ENCODE measurements at regions of chr4 and their contacts with region 1.

Region 1: GRCh38 chr4:26081795-26082498 is 167.9 kb downstream of the SMIM20 start:
- DNase-seq: no peak
- H3K4me3 ChIP-seq: no peak overlapping the region; a peak in 1 of 4 replicates
- H3K27ac ChIP-seq: no peak overlapping the region
- H3K4me1 ChIP-seq: peaks cover 0 to 27% of the 10 kb centered on the region in 2 experiments; a peak in 2 of 4 replicates
- H3K27me3 ChIP-seq: peaks cover 39% of the 10 kb centered on the region
- CTCF ChIP-seq: peak; percentile 80
- EP300 ChIP-seq: no peak
- RAD21 ChIP-seq: peak; percentile 63

Region 2: GRCh38 chr4:26069218-26069617 is 12.7 kb before region 1 on chr4:
- CTCF ChIA-PET with region 1: interaction called, 21 read pairs
- POLR2A ChIA-PET with region 1: no interaction called
- DNase-seq: peak; percentile 62
- H3K4me3 ChIP-seq: no peak overlapping the region; a peak in 1 of 4 replicates
- H3K27ac ChIP-seq: no peak overlapping the region
- H3K4me1 ChIP-seq: peaks cover 0 to 6% of the 10 kb centered on the region in 2 experiments; a peak in 1 of 4 replicates
- H3K27me3 ChIP-seq: peaks cover 6% of the 10 kb centered on the region; the same call in 1 of the 2 replicates
- CTCF ChIP-seq: peak; percentile 48
- EP300 ChIP-seq: no peak
- RAD21 ChIP-seq: peak; percentile 62

Region 3: DNA sequence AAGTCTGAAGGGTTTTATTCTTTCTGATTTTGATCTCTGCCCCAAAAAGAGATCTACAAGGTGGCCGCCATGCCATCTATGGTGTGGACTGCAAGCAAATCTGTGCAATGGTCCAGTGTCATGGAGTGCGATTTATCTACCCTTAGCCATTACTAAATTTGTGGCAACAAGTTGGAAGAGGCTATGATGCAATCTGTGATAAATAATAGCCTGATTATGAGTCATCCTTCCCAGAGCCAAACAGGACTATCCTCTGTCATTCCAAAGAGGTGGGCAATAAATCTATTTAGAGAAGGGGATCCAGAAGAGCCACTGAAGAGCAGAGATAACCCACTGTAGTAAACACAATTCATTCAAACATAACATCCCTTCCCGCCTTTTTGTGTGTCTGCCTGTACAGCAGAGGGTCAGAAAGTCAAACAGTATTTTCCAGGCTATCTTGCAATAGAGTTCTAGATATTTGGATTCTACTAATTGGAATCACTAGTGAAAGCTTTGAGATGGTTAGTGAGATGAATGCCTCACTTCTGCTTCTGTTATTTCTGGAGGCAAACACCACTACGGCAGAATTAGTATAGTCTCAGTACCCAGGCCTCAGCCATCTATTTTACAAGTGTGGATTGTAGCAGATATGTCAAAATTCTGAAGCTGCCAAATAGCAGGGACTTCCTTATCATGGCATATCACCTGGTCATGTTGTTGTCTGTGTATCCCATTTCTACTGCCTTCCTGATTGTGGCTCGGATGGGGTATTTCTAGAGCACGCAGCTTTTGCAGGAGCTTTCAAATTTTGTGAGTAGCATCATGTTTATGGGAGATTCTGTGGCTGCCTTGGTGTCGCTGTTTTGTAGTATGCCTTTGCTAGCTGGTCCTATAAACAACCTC is 24.1 kb after region 1 on chr4:
- CTCF ChIA-PET with region 1: interaction called, 11 read pairs
- POLR2A ChIA-PET with region 1: no interaction called
- DNase-seq: no peak
- H3K4me3 ChIP-seq: no peak overlapping the region
- H3K27ac ChIP-seq: no peak overlapping the region
- H3K4me1 ChIP-seq: no peaks in the 10 kb centered on the region
- H3K27me3 ChIP-seq: no peaks in the 10 kb centered on the region
- CTCF ChIP-seq: no peak
- EP300 ChIP-seq: peak in 1 of 2 experiments; percentile 12; a peak in 1 of 4 replicates
- RAD21 ChIP-seq: no peak

Region 4: DNA sequence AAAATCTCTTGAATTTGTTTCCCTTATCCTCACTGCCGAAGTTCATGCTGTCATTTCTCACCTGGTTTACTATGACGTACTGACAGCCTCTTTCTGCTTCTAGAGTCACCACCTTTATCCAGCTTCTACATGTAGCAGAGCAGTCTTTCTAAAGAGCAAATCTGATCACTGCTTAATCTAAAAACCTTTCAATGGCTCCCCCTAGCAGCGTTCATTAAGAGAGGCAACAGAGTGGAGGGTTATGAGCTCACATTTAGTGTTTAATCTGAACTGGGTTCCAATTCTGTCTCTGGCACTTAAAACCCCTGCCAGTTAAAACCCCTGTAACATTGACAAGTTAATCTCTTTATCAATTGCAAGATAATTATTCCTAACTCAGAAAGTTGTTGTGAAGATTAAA is 243.2 kb after region 1 on chr4:
- CTCF ChIA-PET with region 1: interaction called, 16 read pairs
- POLR2A ChIA-PET with region 1: no interaction called
- DNase-seq: peak; percentile 33
- H3K4me3 ChIP-seq: no peak overlapping the region
- H3K27ac ChIP-seq: no peak overlapping the region
- H3K4me1 ChIP-seq: peaks cover 15 to 19% of the 10 kb centered on the region in 2 experiments
- H3K27me3 ChIP-seq: no peaks in the 10 kb centered on the region
- CTCF ChIP-seq: peak; percentile 52
- EP300 ChIP-seq: no peak
- RAD21 ChIP-seq: peak; percentile 66

Region 5: GRCh38 chr4:26826721-26827120 is 744.8 kb after region 1 on chr4:
- CTCF ChIA-PET with region 1: no interaction called
- POLR2A ChIA-PET with region 1: no interaction called
- DNase-seq: no peak
- H3K4me3 ChIP-seq: no peak overlapping the region
- H3K27ac ChIP-seq: no peak overlapping the region
- H3K4me1 ChIP-seq: no peaks in the 10 kb centered on the region; a peak in 1 of 4 replicates
- H3K27me3 ChIP-seq: no peaks in the 10 kb centered on the region
- CTCF ChIP-seq: no peak
- EP300 ChIP-seq: no peak
- RAD21 ChIP-seq: no peak